ENCODE measurements at regions of chr1 and their contacts with region 1.

Region 1: DNA sequence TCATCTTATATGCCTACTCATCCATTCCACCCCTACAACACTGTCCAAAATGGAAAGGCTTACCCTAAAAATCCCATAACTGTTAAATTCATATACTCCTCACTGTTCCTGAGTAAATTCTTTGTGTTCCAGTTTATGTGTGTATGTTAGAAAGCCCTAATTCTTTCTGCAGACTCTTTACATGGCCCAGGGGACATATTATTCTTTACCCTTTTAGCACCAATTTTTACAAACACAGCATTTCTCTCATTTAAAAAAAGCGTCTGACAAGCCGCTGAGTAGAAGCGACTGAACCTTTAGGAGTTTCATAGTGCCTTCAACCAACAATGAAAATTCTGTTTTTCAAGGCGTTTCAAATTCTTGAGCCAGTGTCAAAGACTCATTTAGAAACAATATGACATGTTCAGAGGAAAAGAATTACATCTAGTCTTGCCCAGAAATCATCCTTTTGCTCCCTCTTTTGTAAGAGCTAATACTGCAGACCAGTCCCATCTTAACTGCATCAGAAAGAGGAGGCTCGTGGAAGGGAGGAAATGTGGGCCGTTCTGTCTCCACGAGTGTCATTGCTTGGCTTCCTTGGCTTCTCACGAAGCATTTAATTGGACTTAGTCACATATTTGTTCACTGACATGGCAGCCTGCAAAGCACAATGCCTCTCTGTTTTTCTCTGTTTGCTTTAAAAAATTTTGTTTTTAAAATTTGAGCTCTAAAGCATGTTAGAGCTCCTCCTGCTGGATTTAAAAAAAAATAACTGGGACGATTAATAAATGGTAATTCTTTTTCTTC is 21.3 kb upstream of the C1orf105 start:
- DNase-seq: no peak
- H3K4me3 Mint-ChIP-seq: no peak overlapping the region
- H3K27ac Mint-ChIP-seq: peak overlapping the region; percentile 18
- H3K4me1 Mint-ChIP-seq: peaks cover 45% of the 10 kb centered on the region
- H3K27me3 Mint-ChIP-seq: no peaks in the 10 kb centered on the region

Region 2: DNA sequence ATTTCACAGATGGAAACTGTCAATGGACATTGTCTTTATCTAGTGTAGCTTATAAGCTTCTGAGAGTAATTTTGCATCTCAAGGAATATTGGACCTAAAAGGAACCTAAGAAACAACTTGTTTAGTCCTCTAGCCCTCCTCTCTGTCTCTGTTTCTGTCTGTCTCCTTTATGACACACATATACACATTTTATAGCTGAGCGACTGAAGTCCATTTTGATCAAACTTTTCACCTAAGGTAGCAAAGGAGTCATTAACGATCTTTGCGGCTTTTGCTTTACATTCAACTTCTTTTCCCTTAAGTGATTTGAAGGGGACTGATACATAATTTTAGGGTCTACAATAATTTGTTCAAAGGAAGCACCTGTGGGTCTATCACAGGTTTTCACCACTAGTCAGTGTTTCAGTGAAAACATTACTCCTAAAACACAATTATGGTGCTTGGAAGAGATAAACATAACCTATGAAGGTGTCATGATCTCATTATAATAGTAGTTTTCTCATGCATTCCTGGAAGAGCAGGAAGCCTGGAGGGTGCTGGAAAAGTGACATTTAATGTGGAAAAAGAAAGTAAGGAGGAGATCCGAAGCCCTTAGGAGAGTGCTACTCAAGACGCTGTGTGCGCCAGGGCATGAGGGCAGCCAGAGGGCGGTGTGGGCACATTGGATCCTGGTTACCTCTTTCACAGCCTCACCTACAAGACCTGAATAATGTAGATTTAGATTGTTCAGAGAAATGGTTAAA is 309.2 kb before region 1 on chr1:
- intact Hi-C with region 1: loop called (anchors 1 kb)
- DNase-seq: peak; percentile 27
- H3K4me3 Mint-ChIP-seq: no peak overlapping the region
- H3K27ac Mint-ChIP-seq: no peak overlapping the region
- H3K4me1 Mint-ChIP-seq: peaks cover 7% of the 10 kb centered on the region
- H3K27me3 Mint-ChIP-seq: peaks cover 7% of the 10 kb centered on the region

Region 3: GRCh38 chr1:172180501-172181285 is 218.5 kb before region 1 on chr1:
- intact Hi-C with region 1: loop called (anchors 2 kb)
- DNase-seq: peak; percentile 40
- H3K4me3 Mint-ChIP-seq: peak overlapping the region; percentile 77
- H3K27ac Mint-ChIP-seq: peak overlapping the region; percentile 97
- H3K4me1 Mint-ChIP-seq: peaks cover 42% of the 10 kb centered on the region
- H3K27me3 Mint-ChIP-seq: no peaks in the 10 kb centered on the region

Region 4: DNA sequence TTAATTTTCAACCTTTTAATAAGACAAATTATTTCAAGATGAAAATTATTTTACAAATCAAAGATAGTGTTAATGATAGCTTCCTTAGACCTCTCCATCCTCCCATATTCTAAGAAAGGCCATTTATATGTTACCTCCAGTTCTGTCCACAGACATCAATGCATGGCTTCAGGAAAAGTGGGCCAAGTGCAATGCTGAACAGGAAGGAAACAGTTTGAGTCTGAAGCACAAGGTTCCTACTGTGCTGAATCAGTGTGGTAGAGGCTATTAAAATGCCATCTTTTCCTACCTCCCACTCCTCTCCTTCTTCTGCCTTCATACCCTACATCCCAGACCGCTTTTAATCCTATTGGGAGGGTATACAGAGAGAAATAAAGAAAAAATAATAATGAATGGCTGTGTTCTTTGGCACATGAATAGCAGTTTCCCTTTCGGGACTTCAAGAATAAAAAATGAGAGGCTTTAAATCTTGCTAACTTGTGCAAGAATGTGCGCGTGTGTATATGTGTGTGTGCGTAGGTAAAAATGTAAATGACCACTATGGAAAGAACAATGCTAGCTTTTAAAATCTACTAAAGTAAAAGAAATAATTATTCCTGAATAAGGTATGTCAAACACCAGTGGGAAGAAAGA is 41.3 kb before region 1 on chr1:
- intact Hi-C with region 1: loop called (anchors 1 kb)
- DNase-seq: no peak
- H3K4me3 Mint-ChIP-seq: no peak overlapping the region
- H3K27ac Mint-ChIP-seq: peak overlapping the region; percentile 82
- H3K4me1 Mint-ChIP-seq: peaks cover 52% of the 10 kb centered on the region
- H3K27me3 Mint-ChIP-seq: no peaks in the 10 kb centered on the region

Region 5: GRCh38 chr1:172388498-172388897 is 10.7 kb before region 1 on chr1:
- intact Hi-C with region 1: no loop called
- DNase-seq: no peak
- H3K4me3 Mint-ChIP-seq: no peak overlapping the region
- H3K27ac Mint-ChIP-seq: no peak overlapping the region
- H3K4me1 Mint-ChIP-seq: peaks cover 15% of the 10 kb centered on the region
- H3K27me3 Mint-ChIP-seq: peaks cover 3% of the 10 kb centered on the region

Measured in activated T-helper 2 cell treated with anti-CD3 and anti-CD28 coated beads, Interferon-gamma antibody, Interleukin-2, Interleukin-4, amounts not matched to agents 10 μg/mL and 5 μg/mL and 100 μg/mL, durations not matched to agents 14 hours and 24 hours and 36 hours (primary cell).